Right cardiac atrium (tissue), 5 donors: ENCODE measurements at regions of chr4 and their contacts with region 1.

Region 1: GRCh38 chr4:88818631-88819470 is 121.2 kb upstream of the NAP1L5 start:
- DNase-seq: peak; percentile 23 to 59 (median 36)
- ATAC-seq: peak; percentile 34 to 37
- H3K4me3 ChIP-seq: peak overlapping the region; percentile 25
- H3K27ac ChIP-seq: peak overlapping the region; percentile 52
- H3K4me1 ChIP-seq: peaks cover 9% of the 10 kb centered on the region
- H3K27me3 ChIP-seq: no peaks in the 10 kb centered on the region

Region 2: DNA sequence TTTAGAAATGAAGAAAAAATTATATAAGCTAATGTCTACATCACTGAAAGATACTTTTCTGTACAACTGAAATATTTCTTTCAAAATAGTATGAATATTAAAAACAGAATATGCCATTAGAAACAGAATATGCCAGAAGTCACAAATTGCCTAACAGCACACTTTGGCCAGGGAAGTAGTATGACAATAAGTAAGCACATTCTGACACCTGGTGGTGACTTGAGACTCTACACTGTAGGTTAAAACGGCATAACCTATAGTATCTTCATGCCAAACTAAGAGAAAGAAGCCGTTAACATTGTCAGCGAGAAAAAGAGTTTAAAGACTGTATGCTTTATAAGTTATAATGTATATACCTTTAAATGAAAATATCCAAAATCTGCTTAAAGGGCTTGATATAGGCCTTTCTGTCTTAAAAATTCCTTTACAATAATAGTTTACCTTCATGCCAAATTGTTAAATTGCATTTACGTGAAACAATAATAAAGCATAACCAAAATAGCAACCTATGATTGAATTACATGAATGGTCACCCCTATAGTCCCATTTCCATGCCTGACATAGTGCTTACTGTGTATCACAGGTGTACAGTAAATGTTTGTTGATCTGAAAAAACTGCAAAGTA is 205.3 kb after region 1 on chr4:
- intact Hi-C with region 1: loop called (anchors 5 kb)
- DNase-seq: peak in 1 of 3 donors; percentile 15
- ATAC-seq: peak; percentile 95 to 96
- H3K4me3 ChIP-seq: no peak overlapping the region
- H3K27ac ChIP-seq: no peak overlapping the region
- H3K4me1 ChIP-seq: peaks cover 3% of the 10 kb centered on the region
- H3K27me3 ChIP-seq: no peaks in the 10 kb centered on the region